HCT116 (cell line): ENCODE measurements at regions of chr20 and their contacts with region 1.

Region 1: GRCh38 chr20:3854462-3854871 is 7.8 kb downstream of the MAVS start:
- DNase-seq: no peak
- ATAC-seq: peak; percentile 40; the same call in 1 of the 2 replicates
- H3K4me3 ChIP-seq: no peak overlapping the region
- H3K27ac ChIP-seq: no peak overlapping the region
- H3K4me1 ChIP-seq: peaks cover 0 to 14% of the 10 kb centered on the region in 2 experiments; a peak in 2 of 4 replicates
- H3K27me3 ChIP-seq: no peaks in the 10 kb centered on the region
- CTCF ChIP-seq: no peak
- POLR2A ChIP-seq: no peak
- RAD21 ChIP-seq: no peak

Region 2: GRCh38 chr20:3696200-3696599 is 158.3 kb before region 1 on chr20:
- CTCF ChIA-PET with region 1: no interaction called
- POLR2A ChIA-PET with region 1: no interaction called
- RAD21 ChIA-PET with region 1: no interaction called
- intact Hi-C with region 1: no loop called
- DNase-seq: no peak
- ATAC-seq: no peak
- H3K4me3 ChIP-seq: no peak overlapping the region
- H3K27ac ChIP-seq: no peak overlapping the region
- H3K4me1 ChIP-seq: no peaks in the 10 kb centered on the region
- H3K27me3 ChIP-seq: no peaks in the 10 kb centered on the region
- CTCF ChIP-seq: peak in 2 of 3 experiments; percentile 57 to 71; a peak in 4 of 6 replicates
- POLR2A ChIP-seq: no peak
- RAD21 ChIP-seq: no peak; the same call in 1 of the 2 replicates

Region 3: GRCh38 chr20:3786665-3787323 is 67.7 kb before region 1 on chr20 and contains the start of gene CENPB:
- CTCF ChIA-PET with region 1: interaction called, 15 read pairs
- POLR2A ChIA-PET with region 1: no interaction called
- RAD21 ChIA-PET with region 1: interaction called in 1 of 2 experiments, 4 read pairs
- intact Hi-C with region 1: loop called (anchors 1 kb)
- DNase-seq: peak; percentile 57
- ATAC-seq: peak; percentile 88
- H3K4me3 ChIP-seq: peak within 1 kb of the TSS; percentile 68 to 70
- H3K27ac ChIP-seq: peak within 1 kb of the TSS; percentile 81
- H3K4me1 ChIP-seq: peaks cover 25 to 40% of the 10 kb centered on the region in 2 experiments
- H3K27me3 ChIP-seq: no peaks in the 10 kb centered on the region
- CTCF ChIP-seq: peak; percentile 58 to 91 (median 67)
- POLR2A ChIP-seq: no peak
- RAD21 ChIP-seq: peak; percentile 84
- total RNA-seq, gene CENPB: 67.2 TPM

Region 4: GRCh38 chr20:3901028-3901705 is 46.7 kb after region 1 on chr20:
- CTCF ChIA-PET with region 1: interaction called, 43 read pairs
- POLR2A ChIA-PET with region 1: interaction called, 5 read pairs
- RAD21 ChIA-PET with region 1: no interaction called
- intact Hi-C with region 1: loop called (anchors 1 kb)
- DNase-seq: no peak
- ATAC-seq: no peak
- H3K4me3 ChIP-seq: no peak overlapping the region
- H3K27ac ChIP-seq: no peak overlapping the region
- H3K4me1 ChIP-seq: peaks cover 30 to 63% of the 10 kb centered on the region in 2 experiments
- H3K27me3 ChIP-seq: no peaks in the 10 kb centered on the region
- CTCF ChIP-seq: no peak
- POLR2A ChIP-seq: no peak
- RAD21 ChIP-seq: no peak